Activated CD8-positive, alpha-beta T cell treated with anti-CD3 and anti-CD28 coated beads, Interleukin-2, amount 10 ng/mL, durations not matched to agents 7 days and 5 days (primary cell): ENCODE measurements at regions of chr12 and their contacts with region 1.

Region 1: DNA sequence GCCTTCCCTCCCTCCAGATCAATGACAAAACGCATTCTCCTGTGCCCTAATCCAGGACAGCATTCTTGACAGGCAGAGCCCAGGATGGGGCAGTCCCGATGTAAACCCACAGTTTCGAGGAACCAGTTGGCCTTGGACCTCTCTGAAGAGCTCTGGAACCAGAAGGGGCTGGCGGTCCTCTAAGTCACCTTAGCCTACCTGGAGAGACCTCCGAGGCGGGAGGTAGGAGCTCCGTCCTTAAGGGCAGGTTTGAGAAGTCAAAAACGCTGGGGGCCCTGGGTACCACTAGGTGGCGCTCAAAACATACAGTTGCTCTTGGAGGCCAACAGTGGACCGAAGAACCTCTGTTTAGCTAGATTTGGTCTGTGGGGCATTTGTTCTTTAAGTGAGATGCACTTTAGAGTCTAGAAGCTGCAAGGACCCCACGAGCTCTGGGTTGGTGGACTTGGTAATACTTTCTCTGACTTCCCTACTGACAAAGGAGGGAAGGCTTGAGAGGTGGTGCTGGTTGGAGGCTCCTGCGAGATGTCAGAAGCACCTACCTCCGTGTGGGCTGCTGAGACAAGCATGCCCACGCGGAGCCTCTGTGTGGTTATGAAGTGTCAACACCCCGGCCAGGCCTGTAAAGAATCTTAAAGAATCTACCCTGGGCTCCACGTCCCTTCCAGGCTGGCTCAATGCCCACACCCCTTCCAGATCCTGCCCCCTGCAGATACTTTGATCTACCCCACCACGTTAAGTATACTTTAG is 74.8 kb upstream of the CHST11 start:
- DNase-seq: peak; percentile 90
- ATAC-seq: peak; percentile 90
- H3K4me3 Mint-ChIP-seq: no peak overlapping the region
- H3K27ac Mint-ChIP-seq: no peak overlapping the region
- H3K4me1 Mint-ChIP-seq: peaks cover 18% of the 10 kb centered on the region
- H3K27me3 Mint-ChIP-seq: peaks cover 9% of the 10 kb centered on the region

Region 2: DNA sequence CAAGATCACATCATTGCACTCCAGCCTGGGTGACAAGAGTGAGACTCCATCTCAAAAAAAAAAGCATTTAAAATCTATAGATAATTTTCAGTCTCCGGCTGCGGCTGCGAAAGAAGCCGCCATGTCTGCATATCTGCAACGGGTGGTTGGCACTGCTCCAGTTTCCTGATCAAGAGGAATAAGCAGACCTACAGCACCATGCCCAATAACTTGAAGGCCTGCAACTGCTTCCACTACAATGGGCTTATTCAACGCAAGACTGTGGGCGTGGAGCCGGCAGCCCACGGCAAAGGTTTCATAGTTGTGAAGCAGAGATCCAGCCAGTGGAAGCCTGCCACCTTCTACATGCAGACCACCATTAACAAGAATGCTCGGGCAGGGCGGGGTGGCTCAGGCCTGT is 109.0 kb before region 1 on chr12:
- CTCF ChIA-PET with region 1: no interaction called
- POLR2A ChIA-PET with region 1: no interaction called
- DNase-seq: no peak
- ATAC-seq: no peak
- H3K4me3 Mint-ChIP-seq: no peak overlapping the region
- H3K27ac Mint-ChIP-seq: no peak overlapping the region
- H3K4me1 Mint-ChIP-seq: peaks cover 9% of the 10 kb centered on the region
- H3K27me3 Mint-ChIP-seq: peaks cover 2% of the 10 kb centered on the region

Region 3: GRCh38 chr12:104371043-104371870 is 10.6 kb before region 1 on chr12:
- CTCF ChIA-PET with region 1: interaction called, 24 read pairs
- POLR2A ChIA-PET with region 1: interaction called, 5 read pairs
- DNase-seq: no peak
- ATAC-seq: no peak
- H3K4me3 Mint-ChIP-seq: no peak overlapping the region
- H3K27ac Mint-ChIP-seq: peak overlapping the region; percentile 85
- H3K4me1 Mint-ChIP-seq: peaks cover 23% of the 10 kb centered on the region
- H3K27me3 Mint-ChIP-seq: peaks cover 3% of the 10 kb centered on the region

Region 4: GRCh38 chr12:104399740-104400612 is 18.1 kb after region 1 on chr12:
- CTCF ChIA-PET with region 1: no interaction called
- POLR2A ChIA-PET with region 1: no interaction called
- DNase-seq: no peak
- ATAC-seq: no peak
- H3K4me3 Mint-ChIP-seq: no peak overlapping the region
- H3K27ac Mint-ChIP-seq: no peak overlapping the region
- H3K4me1 Mint-ChIP-seq: peaks cover 11% of the 10 kb centered on the region
- H3K27me3 Mint-ChIP-seq: peaks cover 3% of the 10 kb centered on the region

Region 5: DNA sequence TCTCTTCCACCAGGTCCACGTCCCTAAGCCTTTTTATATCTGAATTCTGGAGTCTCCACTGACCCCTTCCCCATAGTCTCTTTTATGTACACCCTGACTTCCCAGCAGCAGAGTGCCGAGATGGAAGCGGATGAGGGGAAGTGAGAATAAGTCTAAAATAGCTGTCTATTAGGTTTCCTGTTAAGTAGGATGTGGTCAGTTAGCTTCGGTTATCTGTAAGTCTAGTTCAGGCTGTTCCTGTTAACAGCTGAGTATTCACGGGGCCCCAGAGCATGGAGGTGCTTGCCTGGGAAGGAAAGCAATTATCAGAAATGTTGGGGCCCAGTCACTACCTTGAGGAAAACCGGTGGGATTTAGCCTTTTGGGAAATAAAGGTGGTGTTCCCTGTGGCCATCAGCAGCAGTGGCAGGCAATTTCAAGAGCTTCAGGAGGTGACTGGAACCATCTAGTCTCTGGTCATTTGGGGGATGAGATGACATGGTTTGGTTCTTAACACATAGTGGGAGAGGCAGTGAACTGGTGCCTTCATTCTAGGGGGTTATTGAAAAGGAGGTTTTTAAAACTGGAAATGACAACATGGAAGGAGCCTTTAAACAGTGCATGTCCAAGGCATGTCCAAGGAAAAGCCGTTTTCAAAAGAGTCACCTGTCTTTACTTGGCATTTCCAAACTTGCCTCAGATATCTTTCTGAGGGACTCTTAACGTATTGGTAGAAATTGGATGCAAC is 96.7 kb after region 1 on chr12:
- CTCF ChIA-PET with region 1: interaction called, 15 read pairs
- POLR2A ChIA-PET with region 1: no interaction called
- DNase-seq: peak; percentile 45
- ATAC-seq: peak; percentile 70
- H3K4me3 Mint-ChIP-seq: peak overlapping the region; percentile 82
- H3K27ac Mint-ChIP-seq: peak overlapping the region; percentile 94
- H3K4me1 Mint-ChIP-seq: peaks cover 89% of the 10 kb centered on the region
- H3K27me3 Mint-ChIP-seq: no peaks in the 10 kb centered on the region

Region 6: GRCh38 chr12:104528952-104529840 is 147.3 kb after region 1 on chr12:
- CTCF ChIA-PET with region 1: interaction called, 11 read pairs
- POLR2A ChIA-PET with region 1: no interaction called
- DNase-seq: no peak
- ATAC-seq: no peak
- H3K4me3 Mint-ChIP-seq: no peak overlapping the region
- H3K27ac Mint-ChIP-seq: peak overlapping the region; percentile 22
- H3K4me1 Mint-ChIP-seq: peaks cover 74% of the 10 kb centered on the region
- H3K27me3 Mint-ChIP-seq: no peaks in the 10 kb centered on the region

Region 7: DNA sequence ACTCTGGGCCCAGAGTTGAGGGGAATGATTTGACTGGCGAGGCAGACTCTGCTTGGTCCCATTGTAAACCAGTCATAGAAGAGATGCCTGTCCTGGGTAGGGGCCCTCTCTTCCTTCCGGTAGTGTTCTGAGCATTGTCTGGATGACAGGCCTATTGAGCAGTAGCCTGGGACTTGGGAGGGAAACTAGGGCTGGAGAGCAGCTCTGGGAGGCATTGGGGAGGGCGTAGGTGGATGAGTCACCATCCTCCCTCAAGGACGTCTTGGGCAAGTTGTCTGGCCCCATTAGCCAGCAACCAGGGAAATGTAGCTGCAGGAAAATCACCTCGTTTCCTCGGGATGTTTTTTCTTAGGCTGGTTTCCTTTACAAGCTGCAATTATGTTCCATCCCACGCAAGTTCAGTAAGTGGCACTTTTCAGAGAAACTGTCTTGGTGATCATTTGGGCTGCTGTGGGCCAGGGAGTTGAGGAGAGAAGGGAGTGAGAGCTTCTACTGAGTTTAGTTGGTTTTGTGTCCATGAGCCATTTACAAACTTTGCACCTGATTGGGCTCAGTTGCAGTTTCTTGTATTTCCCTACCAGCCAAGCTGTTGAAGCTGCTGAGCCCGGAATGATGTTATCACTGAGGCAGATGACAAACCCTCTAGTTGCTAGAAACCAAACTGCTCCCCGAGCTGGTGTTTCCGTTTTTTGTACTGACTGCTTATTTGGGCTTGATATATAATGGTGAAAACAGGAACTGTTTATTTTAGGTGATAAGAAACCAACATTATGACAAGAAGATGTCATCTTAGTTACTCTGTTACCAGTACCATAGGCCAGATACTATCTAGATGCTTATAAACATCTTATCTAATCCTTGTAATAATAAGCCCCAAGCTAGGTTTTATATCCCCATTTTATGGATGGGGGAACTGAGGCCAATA is 222.4 kb after region 1 on chr12:
- CTCF ChIA-PET with region 1: interaction called, 18 read pairs
- POLR2A ChIA-PET with region 1: no interaction called
- DNase-seq: peak; percentile 52
- ATAC-seq: peak; percentile 72
- H3K4me3 Mint-ChIP-seq: no peak overlapping the region
- H3K27ac Mint-ChIP-seq: peak overlapping the region; percentile 74
- H3K4me1 Mint-ChIP-seq: peaks cover 60% of the 10 kb centered on the region
- H3K27me3 Mint-ChIP-seq: no peaks in the 10 kb centered on the region

Region 8: GRCh38 chr12:104733717-104734175 is 351.8 kb after region 1 on chr12:
- CTCF ChIA-PET with region 1: interaction called, 12 read pairs
- POLR2A ChIA-PET with region 1: no interaction called
- DNase-seq: peak; percentile 50
- ATAC-seq: peak; percentile 60
- H3K4me3 Mint-ChIP-seq: no peak overlapping the region
- H3K27ac Mint-ChIP-seq: no peak overlapping the region
- H3K4me1 Mint-ChIP-seq: peaks cover 76% of the 10 kb centered on the region
- H3K27me3 Mint-ChIP-seq: no peaks in the 10 kb centered on the region